ENCODE measurements at regions of chr1 and their contacts with region 1.

Region 1: DNA sequence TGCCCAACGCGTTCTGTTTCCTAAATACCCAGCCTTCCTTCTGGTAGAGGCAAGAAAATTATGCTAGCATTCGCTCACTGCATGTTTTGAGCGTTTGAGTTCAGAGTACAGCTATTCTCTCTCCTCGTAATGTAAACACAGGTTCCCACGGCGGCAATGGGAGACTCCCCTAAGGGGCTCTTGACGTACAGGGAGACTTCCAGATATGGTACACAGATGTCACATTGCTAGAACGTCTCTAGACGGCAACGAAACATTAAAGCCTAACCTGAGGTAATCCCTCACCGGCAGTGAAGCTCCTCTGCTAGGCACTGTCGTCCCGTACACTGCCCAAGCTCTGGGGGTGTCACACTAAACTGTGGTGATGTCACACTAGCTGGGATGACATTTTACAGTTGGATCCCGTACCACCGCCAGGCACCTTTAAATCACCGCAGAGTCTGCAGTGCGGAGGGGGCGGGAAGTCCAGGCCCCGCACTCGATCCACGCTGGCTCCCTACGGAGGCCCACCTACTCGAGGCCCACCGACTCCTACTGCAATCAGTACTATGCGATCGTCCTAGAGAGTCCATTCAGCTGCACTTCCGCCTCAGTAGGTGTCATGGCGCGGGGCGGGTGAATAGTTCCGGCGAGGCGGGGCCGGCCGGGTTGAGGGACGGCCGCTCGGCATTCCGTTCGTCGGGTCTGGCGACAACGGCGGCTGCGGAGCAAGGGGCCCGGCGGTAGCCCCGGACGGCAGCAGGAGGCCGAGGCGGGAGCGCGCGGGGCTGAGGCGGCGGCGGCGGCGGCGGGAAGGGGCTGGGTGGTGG is at the start of gene HIPK1:
- DNase-seq: peak; percentile 88 to 97 (median 93)
- ATAC-seq: peak; percentile 69
- H3K4me3 ChIP-seq: peak within 1 kb of the TSS; percentile 100
- H3K4me3 Mint-ChIP-seq: peak within 1 kb of the TSS; percentile 96 to 100 (median 99)
- H3K27ac ChIP-seq: peak within 1 kb of the TSS; percentile 99
- H3K27ac Mint-ChIP-seq: peak within 1 kb of the TSS; percentile 93 to 100 (median 100)
- H3K4me1 ChIP-seq: peaks cover 41 to 46% of the 10 kb centered on the region in 2 donors
- H3K4me1 Mint-ChIP-seq: peaks cover 41 to 56% (median 48%) of the 10 kb centered on the region in 7 donors
- H3K27me3 ChIP-seq: no peaks in the 10 kb centered on the region
- H3K27me3 Mint-ChIP-seq: peaks cover 0 to 12% (median 0%) of the 10 kb centered on the region in 5 donors
- total RNA-seq, gene HIPK1: 95.8 to 211 (median 124) TPM

Region 2: GRCh38 chr1:112955781-112956543 is 973.2 kb before region 1 on chr1 and contains the start of gene SLC16A1:
- CTCF ChIA-PET with region 1: no interaction called
- POLR2A ChIA-PET with region 1: no interaction called
- intact Hi-C with region 1: loop called in 1 of 2 experiments (anchors 2 kb)
- DNase-seq: peak; percentile 80 to 94 (median 87)
- ATAC-seq: peak; percentile 90
- H3K4me3 ChIP-seq: peak within 1 kb of the TSS; percentile 97
- H3K4me3 Mint-ChIP-seq: peak within 1 kb of the TSS; percentile 71 to 100 (median 97)
- H3K27ac ChIP-seq: peak within 1 kb of the TSS; percentile 81
- H3K27ac Mint-ChIP-seq: peak within 1 kb of the TSS; percentile 25 to 100 (median 88)
- H3K4me1 ChIP-seq: peaks cover 16 to 17% of the 10 kb centered on the region in 2 donors
- H3K4me1 Mint-ChIP-seq: peaks cover 33 to 66% (median 57%) of the 10 kb centered on the region in 7 donors
- H3K27me3 ChIP-seq: no peaks in the 10 kb centered on the region
- H3K27me3 Mint-ChIP-seq: no peaks in the 10 kb centered on the region
- total RNA-seq, gene SLC16A1: 10.1 to 43.6 (median 19.1) TPM

Region 3: DNA sequence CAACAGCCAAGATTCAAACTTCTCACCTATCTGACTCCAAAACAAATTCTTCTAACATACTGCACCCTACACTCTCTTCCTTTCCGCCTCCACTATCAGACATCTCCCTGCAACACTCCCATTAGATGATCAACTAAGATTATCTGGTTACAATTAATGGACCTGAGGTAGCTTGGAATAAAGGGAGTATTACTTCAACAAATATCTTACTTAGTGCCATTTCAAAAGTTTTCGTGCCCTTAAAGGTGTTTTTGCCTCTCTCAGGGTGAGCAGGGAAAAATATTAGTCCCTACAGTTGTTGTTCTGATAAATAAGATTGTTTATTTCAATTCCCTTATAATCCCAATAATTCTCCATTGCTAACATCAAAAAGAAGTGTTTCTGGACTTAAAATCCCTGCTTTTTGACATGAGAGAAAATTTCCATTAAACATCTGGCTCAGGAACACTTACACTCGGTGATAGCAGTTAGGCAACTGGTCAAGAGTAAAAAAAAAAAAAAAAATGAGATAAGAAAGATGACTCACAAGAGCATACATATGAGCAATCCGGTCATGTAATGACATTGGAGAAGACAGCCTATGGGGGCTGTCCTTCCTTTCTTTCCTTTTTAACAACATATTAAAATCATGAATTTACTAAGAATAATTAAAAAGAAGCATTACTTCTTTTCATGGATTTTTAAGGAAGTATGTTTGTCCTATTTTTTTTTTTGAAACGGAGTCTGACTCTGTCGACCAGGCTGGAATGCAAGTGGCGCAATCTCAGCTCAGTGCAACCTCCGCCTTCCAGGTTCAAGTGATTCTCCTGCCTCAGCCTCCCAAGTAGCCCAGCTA is 124.5 kb before region 1 on chr1:
- CTCF ChIA-PET with region 1: no interaction called
- POLR2A ChIA-PET with region 1: no interaction called
- intact Hi-C with region 1: no loop called
- DNase-seq: no peak
- ATAC-seq: peak; percentile 46
- H3K4me3 ChIP-seq: no peak overlapping the region
- H3K4me3 Mint-ChIP-seq: peak overlapping the region in 8 of 10 donors; percentile 26 to 91 (median 50)
- H3K27ac ChIP-seq: no peak overlapping the region
- H3K27ac Mint-ChIP-seq: peak overlapping the region in 5 of 9 donors; percentile 17 to 80 (median 37)
- H3K4me1 ChIP-seq: peaks cover 40 to 45% of the 10 kb centered on the region in 2 donors
- H3K4me1 Mint-ChIP-seq: peaks cover 57 to 98% (median 92%) of the 10 kb centered on the region in 7 donors
- H3K27me3 ChIP-seq: no peaks in the 10 kb centered on the region
- H3K27me3 Mint-ChIP-seq: no peaks in the 10 kb centered on the region

Region 4: DNA sequence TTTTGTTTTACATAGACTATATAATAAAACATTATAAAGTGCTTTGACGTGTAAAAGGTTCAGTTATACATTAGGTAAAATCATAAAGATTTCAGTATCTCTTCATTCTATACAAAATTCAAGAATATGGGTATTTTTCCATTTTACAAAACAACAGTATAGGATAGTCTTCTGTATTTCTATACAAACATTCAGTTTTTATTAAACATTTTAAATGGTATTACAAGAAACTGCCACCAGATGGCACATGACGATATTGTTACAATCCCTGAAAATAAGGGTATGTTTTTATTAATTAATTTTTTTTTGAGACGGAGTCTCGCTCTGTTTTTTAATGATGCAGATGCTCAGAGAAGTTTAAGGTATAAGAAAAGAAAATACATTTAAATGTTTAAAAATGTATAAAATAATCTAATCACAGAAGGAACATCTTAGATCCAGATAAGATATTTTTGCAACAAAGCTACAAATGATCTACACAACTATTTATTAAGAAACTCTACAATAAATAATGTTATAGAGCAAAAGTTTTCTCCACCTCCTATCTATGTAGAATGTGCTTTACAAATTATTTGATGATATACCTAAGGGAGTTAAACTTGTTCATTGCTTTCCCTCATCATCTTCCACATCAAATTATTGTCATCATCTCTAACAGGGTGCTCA is 93.4 kb before region 1 on chr1:
- CTCF ChIA-PET with region 1: interaction called, 16 read pairs
- POLR2A ChIA-PET with region 1: interaction called, 8 read pairs
- intact Hi-C with region 1: loop called (anchors 1 kb)
- DNase-seq: peak in 7 of 9 donors; percentile 26 to 61 (median 51)
- ATAC-seq: peak; percentile 66
- H3K4me3 ChIP-seq: no peak overlapping the region
- H3K4me3 Mint-ChIP-seq: no peak overlapping the region
- H3K27ac ChIP-seq: no peak overlapping the region
- H3K27ac Mint-ChIP-seq: peak overlapping the region in 2 of 9 donors; percentile 14 to 47
- H3K4me1 ChIP-seq: no peaks in the 10 kb centered on the region
- H3K4me1 Mint-ChIP-seq: peaks cover 4 to 10% (median 8%) of the 10 kb centered on the region in 7 donors
- H3K27me3 ChIP-seq: no peaks in the 10 kb centered on the region
- H3K27me3 Mint-ChIP-seq: no peaks in the 10 kb centered on the region

Region 5: GRCh38 chr1:113940365-113941244 is 11.5 kb after region 1 on chr1:
- CTCF ChIA-PET with region 1: interaction called, 21 read pairs
- POLR2A ChIA-PET with region 1: interaction called, 360 read pairs
- intact Hi-C with region 1: loop called (anchors 1 kb)
- DNase-seq: peak in 6 of 9 donors; percentile 31 to 55 (median 43)
- ATAC-seq: peak; percentile 67
- H3K4me3 ChIP-seq: peak overlapping the region; percentile 29
- H3K4me3 Mint-ChIP-seq: peak overlapping the region; percentile 64 to 87 (median 80)
- H3K27ac ChIP-seq: peak overlapping the region; percentile 46
- H3K27ac Mint-ChIP-seq: peak overlapping the region; percentile 85 to 98 (median 94)
- H3K4me1 ChIP-seq: peaks cover 48 to 74% of the 10 kb centered on the region in 2 donors
- H3K4me1 Mint-ChIP-seq: peaks cover 58 to 88% (median 79%) of the 10 kb centered on the region in 7 donors
- H3K27me3 ChIP-seq: no peaks in the 10 kb centered on the region
- H3K27me3 Mint-ChIP-seq: no peaks in the 10 kb centered on the region

Region 6: DNA sequence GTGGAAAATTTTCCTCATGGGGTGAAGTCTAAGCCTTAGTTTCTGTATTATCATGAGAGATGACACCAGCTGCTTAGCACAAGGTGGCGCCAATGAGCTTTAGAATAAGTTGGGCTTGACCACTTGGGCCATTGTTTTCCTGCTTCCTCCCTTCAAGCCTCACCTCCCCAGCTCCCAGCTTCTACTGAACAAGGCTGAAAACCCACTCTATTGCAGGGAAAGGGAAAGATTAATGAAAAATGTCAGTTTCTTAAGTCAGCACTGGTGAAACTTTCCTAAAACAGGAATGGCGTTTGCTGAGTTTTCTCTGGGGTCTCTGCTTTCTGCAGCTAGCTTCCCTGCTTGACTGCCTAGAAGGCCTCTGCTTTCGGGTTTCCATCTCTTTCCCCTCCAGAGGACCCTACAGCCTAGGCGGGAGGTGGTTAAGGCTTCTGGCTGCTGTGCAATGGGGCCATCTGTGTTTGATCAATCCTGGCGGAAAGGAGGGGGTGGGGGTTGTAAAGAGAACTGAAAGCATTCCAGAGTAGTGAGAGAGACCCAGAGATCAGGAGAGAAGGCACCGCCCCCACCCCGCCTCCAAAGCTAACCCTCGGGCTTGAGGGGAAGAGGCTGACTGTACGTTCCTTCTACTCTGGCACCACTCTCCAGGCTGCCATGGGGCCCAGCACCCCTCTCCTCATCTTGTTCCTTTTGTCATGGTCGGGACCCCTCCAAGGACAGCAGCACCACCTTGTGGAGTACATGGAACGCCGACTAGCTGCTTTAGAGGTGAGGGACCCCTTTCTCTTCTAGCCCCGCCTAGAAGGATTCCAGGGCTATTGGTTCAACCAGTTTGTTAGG is 49.9 kb after region 1 on chr1 and contains the start of gene OLFML3:
- CTCF ChIA-PET with region 1: interaction called, 4 read pairs
- POLR2A ChIA-PET with region 1: no interaction called
- intact Hi-C with region 1: loop called in 1 of 2 experiments (anchors 1 kb)
- DNase-seq: peak in 5 of 9 donors; percentile 11 to 28 (median 17)
- ATAC-seq: peak; percentile 60
- H3K4me3 ChIP-seq: no peak within 1 kb of the TSS
- H3K4me3 Mint-ChIP-seq: no peak within 1 kb of the TSS
- H3K27ac ChIP-seq: no peak within 1 kb of the TSS
- H3K27ac Mint-ChIP-seq: peak within 1 kb of the TSS in 7 of 9 donors; percentile 31 to 48 (median 40)
- H3K4me1 ChIP-seq: peaks cover 0 to 11% of the 10 kb centered on the region in 2 donors
- H3K4me1 Mint-ChIP-seq: peaks cover 24 to 49% (median 35%) of the 10 kb centered on the region in 7 donors
- H3K27me3 ChIP-seq: no peaks in the 10 kb centered on the region
- H3K27me3 Mint-ChIP-seq: no peaks in the 10 kb centered on the region
- total RNA-seq, gene OLFML3: 0.24 to 1.8 (median 1.1) TPM

Region 7: GRCh38 chr1:114757455-114758250 is 828.5 kb after region 1 on chr1 and contains the start of gene CSDE1:
- CTCF ChIA-PET with region 1: no interaction called
- POLR2A ChIA-PET with region 1: interaction called, 3 read pairs
- intact Hi-C with region 1: loop called (anchors 2 kb)
- DNase-seq: peak; percentile 91 to 97 (median 96)
- ATAC-seq: peak; percentile 90
- H3K4me3 ChIP-seq: peak within 1 kb of the TSS; percentile 100
- H3K4me3 Mint-ChIP-seq: peak within 1 kb of the TSS; percentile 95 to 100 (median 100)
- H3K27ac ChIP-seq: peak within 1 kb of the TSS; percentile 97
- H3K27ac Mint-ChIP-seq: peak within 1 kb of the TSS; percentile 97 to 100 (median 100)
- H3K4me1 ChIP-seq: peaks cover 44 to 49% of the 10 kb centered on the region in 2 donors
- H3K4me1 Mint-ChIP-seq: peaks cover 32 to 60% (median 51%) of the 10 kb centered on the region in 7 donors
- H3K27me3 ChIP-seq: no peaks in the 10 kb centered on the region
- H3K27me3 Mint-ChIP-seq: no peaks in the 10 kb centered on the region
- total RNA-seq, gene CSDE1: 378 to 638 (median 561) TPM

Measured in naive thymus-derived CD4-positive, alpha-beta T cell (primary cell).